ENCODE measurements at regions of chr2 and their contacts with region 1.

Region 1: DNA sequence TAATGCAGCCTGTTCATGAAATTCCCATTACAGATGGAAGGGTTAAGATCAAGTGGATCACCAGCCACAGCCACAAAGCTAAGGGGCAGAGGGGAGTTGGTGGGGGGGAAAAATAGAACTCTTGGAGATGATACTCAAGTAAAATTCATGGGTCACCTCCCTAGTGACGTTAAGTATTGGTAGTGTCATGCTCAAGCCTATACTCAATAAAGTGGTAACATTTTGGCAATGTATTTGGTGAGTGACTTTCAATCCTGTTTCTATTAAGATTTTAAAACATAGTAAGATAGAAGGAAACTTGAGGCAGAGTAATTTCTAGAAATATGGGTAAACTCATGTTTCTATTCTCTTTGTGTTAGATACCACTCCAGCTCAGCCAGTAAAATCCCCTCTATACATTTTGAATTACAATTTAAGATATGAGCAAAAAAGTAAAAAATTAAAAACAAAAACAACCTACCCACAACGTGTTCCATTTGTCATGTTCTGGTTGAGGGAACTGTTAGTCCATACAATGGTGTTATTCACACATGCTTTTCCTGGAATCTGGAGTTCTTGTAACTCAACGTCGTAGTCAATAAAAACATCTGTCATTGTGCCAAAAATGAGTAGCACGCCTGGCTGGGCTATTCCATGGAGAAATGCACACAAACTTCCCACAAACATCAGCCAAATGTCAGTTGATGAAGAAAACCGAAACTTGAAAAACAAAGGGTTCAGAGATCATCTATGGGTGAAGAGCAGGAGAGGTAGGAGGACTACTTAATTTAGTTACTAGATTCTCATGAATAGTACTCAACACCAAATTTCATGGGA is 18.1 kb downstream of the ABCB11 start:
- DNase-seq: no peak
- ATAC-seq: no peak

Region 2: DNA sequence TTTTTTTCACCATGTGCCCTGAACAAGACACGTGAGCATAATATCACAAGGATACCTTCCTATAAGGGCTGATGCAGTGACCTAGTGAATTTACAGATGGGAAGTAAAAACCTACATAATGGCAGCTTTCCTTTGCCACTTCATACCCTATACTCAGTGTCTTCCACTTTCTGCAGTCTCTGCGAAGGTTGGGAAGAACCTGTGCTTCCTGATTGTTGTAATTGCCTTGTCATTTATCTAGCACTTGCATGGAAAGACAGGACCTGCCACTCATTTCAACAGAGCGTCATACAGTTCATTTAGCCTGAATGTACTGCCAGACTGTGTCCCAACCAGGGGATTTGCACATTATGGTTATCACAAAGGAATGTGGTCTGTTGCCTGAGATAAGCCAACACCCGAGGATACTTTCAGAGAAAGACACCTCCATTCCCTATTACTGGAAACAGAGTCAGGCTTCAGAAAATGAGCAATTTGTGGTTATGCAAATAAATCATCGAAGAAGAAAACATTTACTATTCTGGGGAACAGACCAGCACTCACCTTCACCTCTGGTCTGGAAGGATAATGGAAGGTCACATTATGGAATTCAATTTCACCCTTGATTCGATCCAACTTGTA is 36.9 kb before region 1 on chr2:
- intact Hi-C with region 1: loop called in 1 of 2 experiments (anchors 2 kb)
- DNase-seq: no peak
- ATAC-seq: peak in 1 of 2 donors; percentile 73

Region 3: GRCh38 chr2:169072163-169072925 is 59.3 kb after region 1 on chr2:
- intact Hi-C with region 1: loop called in 1 of 2 experiments (anchors 5 kb)
- DNase-seq: no peak
- ATAC-seq: peak; percentile 41 to 65

Region 4: GRCh38 chr2:169208026-169208425 is 195.0 kb after region 1 on chr2:
- intact Hi-C with region 1: no loop called
- DNase-seq: no peak
- ATAC-seq: no peak

Measured in left cardiac atrium (tissue), 4 donors.